ENCODE measurements at regions of chr1 and their contacts with region 1.

Region 1: GRCh38 chr1:233790662-233791375 is 113.7 kb upstream of the SLC35F3 start:
- DNase-seq: peak; percentile 87
- H3K27ac ChIP-seq: no peak overlapping the region
- CTCF ChIP-seq: peak; percentile 91

Region 2: GRCh38 chr1:233440951-233441401 is 349.8 kb before region 1 on chr1:
- CTCF ChIA-PET with region 1: interaction called, 17 read pairs
- POLR2A ChIA-PET with region 1: no interaction called
- DNase-seq: peak; percentile 63
- H3K27ac ChIP-seq: no peak overlapping the region
- CTCF ChIP-seq: peak; percentile 66

Region 3: DNA sequence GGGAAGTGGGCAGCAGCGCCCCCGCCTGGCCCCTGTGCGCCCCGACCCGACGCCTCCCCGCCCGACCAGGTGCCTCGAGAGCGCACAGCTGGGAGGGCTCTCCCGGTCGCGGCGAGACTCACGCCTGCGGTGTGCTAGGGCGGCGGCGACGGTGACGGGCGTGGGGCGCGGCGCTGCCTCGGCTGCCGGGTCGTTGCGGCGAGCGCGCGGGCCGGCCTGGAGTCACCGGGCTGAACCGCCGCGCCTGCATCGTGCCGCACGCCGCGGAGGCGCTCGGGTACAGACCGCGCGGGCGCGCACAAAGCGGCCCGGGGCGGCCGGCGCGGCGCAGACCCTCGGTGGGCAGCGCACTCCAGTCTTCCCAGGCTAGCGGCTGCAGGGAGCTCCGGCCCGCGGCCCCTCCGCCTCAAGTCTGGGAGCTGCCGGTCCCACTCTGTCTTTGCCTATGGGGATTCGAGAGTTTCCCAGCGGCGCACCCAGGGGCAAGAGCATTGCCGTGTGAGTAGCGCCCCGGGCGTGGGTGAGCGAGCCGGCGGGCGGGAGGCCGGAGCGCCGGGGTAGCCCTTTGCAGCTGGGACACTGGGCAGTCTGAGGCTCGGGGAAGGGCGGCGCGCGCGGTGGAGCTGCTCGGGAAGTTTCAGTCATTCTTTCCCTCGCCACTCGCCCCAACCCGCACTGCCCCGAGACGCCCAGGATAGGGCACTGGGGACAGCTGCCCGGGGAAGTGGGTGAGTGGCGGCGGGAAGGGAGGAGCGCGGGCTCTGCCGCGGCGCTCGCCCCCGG is 114.0 kb after region 1 on chr1 and contains the start of gene SLC35F3:
- CTCF ChIA-PET with region 1: interaction called, 6 read pairs
- POLR2A ChIA-PET with region 1: interaction called, 10 read pairs
- DNase-seq: peak; percentile 77
- H3K27ac ChIP-seq: peak within 1 kb of the TSS; percentile 57
- CTCF ChIP-seq: peak; percentile 76